MCF 10A (cell line): ENCODE measurements at regions of chr17 and their contacts with region 1.

Region 1: GRCh38 chr17:56819431-56820145 is 14.1 kb downstream of the C17orf67 start:
- DNase-seq: peak; percentile 87
- H3K4me3 Mint-ChIP-seq: no peak overlapping the region
- H3K27ac Mint-ChIP-seq: peak overlapping the region; percentile 9
- H3K4me1 Mint-ChIP-seq: peaks cover 4% of the 10 kb centered on the region
- H3K27me3 Mint-ChIP-seq: no peaks in the 10 kb centered on the region
- CTCF ChIP-seq: peak; percentile 74

Region 2: DNA sequence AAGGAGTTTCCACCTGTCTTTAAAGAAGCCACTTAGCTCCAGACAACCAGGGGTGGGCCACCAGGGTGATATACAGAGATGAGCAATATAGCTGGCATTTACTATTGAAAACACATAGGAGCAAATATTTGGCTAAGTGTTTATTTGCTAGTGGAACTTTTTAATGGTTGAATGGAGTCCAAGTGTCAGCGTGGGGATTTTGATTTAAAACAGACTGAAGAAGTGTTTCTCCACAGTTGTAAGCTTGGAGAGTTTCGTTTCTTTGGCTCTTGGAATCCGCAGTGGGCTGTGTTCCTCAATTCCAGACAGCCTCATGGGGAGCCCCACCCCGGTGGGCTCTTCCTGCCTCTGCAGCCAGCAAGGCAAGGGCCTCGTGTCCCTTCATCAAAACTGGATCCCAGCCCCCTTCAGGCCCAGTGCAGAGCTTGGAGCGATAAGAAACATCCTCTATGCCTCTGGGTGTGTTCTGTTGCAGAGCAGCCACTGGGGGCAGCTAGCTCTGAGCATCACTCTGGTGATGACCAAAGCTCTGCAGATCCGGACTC is 190.0 kb before region 1 on chr17:
- CTCF ChIA-PET with region 1: no interaction called
- POLR2A ChIA-PET with region 1: no interaction called
- intact Hi-C with region 1: no loop called
- DNase-seq: no peak
- H3K4me3 Mint-ChIP-seq: no peak overlapping the region
- H3K27ac Mint-ChIP-seq: no peak overlapping the region
- H3K4me1 Mint-ChIP-seq: peaks cover 8% of the 10 kb centered on the region
- H3K27me3 Mint-ChIP-seq: no peaks in the 10 kb centered on the region
- CTCF ChIP-seq: no peak

Region 3: GRCh38 chr17:56779898-56780733 is 39.5 kb before region 1 on chr17:
- CTCF ChIA-PET with region 1: interaction called, 12 read pairs
- POLR2A ChIA-PET with region 1: interaction called, 13 read pairs
- intact Hi-C with region 1: no loop called
- DNase-seq: peak; percentile 79
- H3K4me3 Mint-ChIP-seq: peak overlapping the region; percentile 82
- H3K27ac Mint-ChIP-seq: no peak overlapping the region
- H3K4me1 Mint-ChIP-seq: peaks cover 32% of the 10 kb centered on the region
- H3K27me3 Mint-ChIP-seq: no peaks in the 10 kb centered on the region
- CTCF ChIP-seq: peak; percentile 94

Region 4: GRCh38 chr17:56793957-56794356 is 25.6 kb before region 1 on chr17:
- CTCF ChIA-PET with region 1: interaction called, 10 read pairs
- POLR2A ChIA-PET with region 1: no interaction called
- intact Hi-C with region 1: no loop called
- DNase-seq: no peak
- H3K4me3 Mint-ChIP-seq: no peak overlapping the region
- H3K27ac Mint-ChIP-seq: peak overlapping the region; percentile 22
- H3K4me1 Mint-ChIP-seq: peaks cover 4% of the 10 kb centered on the region
- H3K27me3 Mint-ChIP-seq: no peaks in the 10 kb centered on the region
- CTCF ChIP-seq: no peak

Region 5: GRCh38 chr17:56833809-56834379 is 14.3 kb after region 1 on chr17 and contains the starts of genes C17orf67 and DGKE:
- CTCF ChIA-PET with region 1: interaction called, 21 read pairs
- POLR2A ChIA-PET with region 1: interaction called, 59 read pairs
- intact Hi-C with region 1: no loop called
- DNase-seq: peak; percentile 96
- H3K4me3 Mint-ChIP-seq: peak within 1 kb of the TSS; percentile 97
- H3K27ac Mint-ChIP-seq: peak within 1 kb of the TSS; percentile 66
- H3K4me1 Mint-ChIP-seq: peaks cover 47% of the 10 kb centered on the region
- H3K27me3 Mint-ChIP-seq: no peaks in the 10 kb centered on the region
- CTCF ChIP-seq: no peak
- total RNA-seq, gene C17orf67: 3.3 and 3.5 TPM in 2 replicates
- total RNA-seq, gene DGKE: 16.5 and 23.9 TPM in 2 replicates

Region 6: DNA sequence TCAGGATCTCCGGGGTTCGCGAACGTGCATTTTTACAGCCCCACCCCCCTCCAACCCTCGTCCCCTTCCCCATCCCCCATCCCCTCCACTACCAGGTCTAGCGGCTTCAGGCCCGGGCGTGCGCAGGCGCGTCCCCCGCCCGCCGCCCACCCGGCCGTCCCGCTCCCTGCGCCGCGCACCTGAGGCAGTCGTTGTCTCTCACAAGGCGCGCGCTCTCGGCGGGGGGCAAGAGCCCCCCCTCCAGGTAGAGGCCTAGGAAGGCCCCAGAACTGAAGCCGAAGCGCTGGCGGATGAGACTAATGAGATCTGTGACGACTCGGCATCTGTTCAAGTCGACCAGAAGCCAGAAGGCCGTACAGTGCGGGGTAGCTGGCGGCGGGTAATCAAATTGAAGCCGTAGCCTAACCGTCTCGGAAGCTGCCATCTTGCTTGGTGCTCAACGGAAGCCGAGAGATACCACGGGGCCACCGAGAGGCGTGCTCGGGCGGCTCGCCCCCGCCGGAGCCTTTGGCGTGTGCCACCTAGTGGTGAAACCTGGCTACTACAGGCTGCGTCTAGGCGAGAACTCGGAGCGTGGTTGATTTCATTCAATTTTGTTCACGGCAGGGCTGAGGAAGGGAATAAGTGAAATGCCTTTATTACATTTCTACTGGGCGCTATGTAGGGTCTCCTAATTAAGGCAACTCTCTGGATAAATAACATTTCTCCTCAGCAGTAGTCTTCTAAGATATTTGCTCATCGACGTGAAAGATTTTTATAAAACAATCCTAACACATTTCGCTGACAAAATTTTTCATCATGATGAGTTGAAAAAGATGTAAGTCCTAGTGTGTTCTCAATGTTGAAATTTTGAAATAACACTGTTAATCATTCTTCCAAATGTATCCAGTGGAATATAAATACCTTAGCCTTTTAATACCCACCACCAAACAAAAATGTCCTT is 141.3 kb after region 1 on chr17 and contains the start of gene COIL:
- CTCF ChIA-PET with region 1: no interaction called
- POLR2A ChIA-PET with region 1: no interaction called
- intact Hi-C with region 1: loop called (anchors 1 kb)
- DNase-seq: peak; percentile 89
- H3K4me3 Mint-ChIP-seq: peak within 1 kb of the TSS; percentile 73
- H3K27ac Mint-ChIP-seq: peak within 1 kb of the TSS; percentile 46
- H3K4me1 Mint-ChIP-seq: peaks cover 5% of the 10 kb centered on the region
- H3K27me3 Mint-ChIP-seq: no peaks in the 10 kb centered on the region
- CTCF ChIP-seq: peak; percentile 94
- total RNA-seq, gene COIL: 15.4 and 17.2 TPM in 2 replicates